Naive thymus-derived CD4-positive, alpha-beta T cell (primary cell): ENCODE measurements at regions of chr5 and their contacts with region 1.

Region 1: DNA sequence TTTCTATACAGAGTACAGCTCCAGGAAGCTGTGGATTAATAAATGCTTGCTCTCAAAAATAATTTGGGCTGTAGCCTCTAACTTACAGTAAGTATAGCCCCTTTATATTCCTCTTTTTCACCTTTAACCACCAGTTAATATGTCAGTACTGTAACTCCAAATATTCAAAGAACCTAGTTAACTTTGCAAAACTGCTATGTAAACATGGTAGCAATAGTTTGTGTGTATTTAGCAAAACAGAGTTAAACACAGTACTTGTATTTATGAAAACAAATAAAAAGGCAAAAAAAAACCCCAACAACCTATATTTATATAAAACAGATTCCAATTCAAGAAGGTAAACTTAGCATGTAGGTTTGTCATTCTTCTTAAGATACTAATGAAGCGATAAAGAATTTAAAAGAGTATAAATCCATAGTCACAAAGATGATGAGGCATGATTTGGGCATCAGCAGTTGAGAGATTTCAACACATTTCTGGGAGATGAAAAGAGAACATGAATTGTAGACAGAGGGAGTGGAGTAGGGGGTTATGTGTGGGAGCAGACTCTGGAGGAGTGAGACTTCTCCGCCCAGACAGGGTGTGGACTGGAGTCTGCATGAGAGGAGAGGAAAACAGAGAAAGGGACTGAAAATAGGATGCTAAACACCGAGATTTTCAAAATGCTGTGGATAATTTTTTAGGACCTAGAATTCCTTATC is 47.0 kb upstream of the F2RL1 start:
- DNase-seq: no peak
- ATAC-seq: no peak
- H3K4me3 ChIP-seq: no peak overlapping the region
- H3K4me3 Mint-ChIP-seq: no peak overlapping the region
- H3K27ac ChIP-seq: no peak overlapping the region
- H3K27ac Mint-ChIP-seq: peak overlapping the region in 2 of 9 donors; percentile 6 to 32
- H3K4me1 ChIP-seq: no peaks in the 10 kb centered on the region
- H3K4me1 Mint-ChIP-seq: peaks cover 0 to 7% (median 3%) of the 10 kb centered on the region in 7 donors
- H3K27me3 ChIP-seq: no peaks in the 10 kb centered on the region
- H3K27me3 Mint-ChIP-seq: peaks cover 0 to 4% (median 0%) of the 10 kb centered on the region in 5 donors

Region 2: GRCh38 chr5:76641514-76642120 is 130.2 kb before region 1 on chr5:
- CTCF ChIA-PET with region 1: no interaction called
- POLR2A ChIA-PET with region 1: no interaction called
- intact Hi-C with region 1: loop called in 1 of 2 experiments (anchors 1 kb)
- DNase-seq: peak; percentile 13 to 71 (median 55)
- ATAC-seq: peak; percentile 78
- H3K4me3 ChIP-seq: no peak overlapping the region
- H3K4me3 Mint-ChIP-seq: no peak overlapping the region
- H3K27ac ChIP-seq: no peak overlapping the region
- H3K27ac Mint-ChIP-seq: no peak overlapping the region
- H3K4me1 ChIP-seq: no peaks in the 10 kb centered on the region
- H3K4me1 Mint-ChIP-seq: peaks cover 0 to 13% (median 0%) of the 10 kb centered on the region in 7 donors
- H3K27me3 ChIP-seq: no peaks in the 10 kb centered on the region
- H3K27me3 Mint-ChIP-seq: no peaks in the 10 kb centered on the region

Region 3: GRCh38 chr5:76736679-76737556 is 34.9 kb before region 1 on chr5:
- CTCF ChIA-PET with region 1: interaction called, 9 read pairs
- POLR2A ChIA-PET with region 1: interaction called, 5 read pairs
- intact Hi-C with region 1: loop called in 1 of 2 experiments (anchors 1 kb)
- DNase-seq: no peak
- ATAC-seq: no peak
- H3K4me3 ChIP-seq: no peak overlapping the region
- H3K4me3 Mint-ChIP-seq: peak overlapping the region in 2 of 10 donors; percentile 51 to 69
- H3K27ac ChIP-seq: no peak overlapping the region
- H3K27ac Mint-ChIP-seq: peak overlapping the region in 2 of 9 donors; percentile 71 to 79
- H3K4me1 ChIP-seq: peaks cover 5 to 70% of the 10 kb centered on the region in 2 donors
- H3K4me1 Mint-ChIP-seq: peaks cover 8 to 49% (median 11%) of the 10 kb centered on the region in 7 donors
- H3K27me3 ChIP-seq: no peaks in the 10 kb centered on the region
- H3K27me3 Mint-ChIP-seq: peaks cover 3 to 11% (median 5%) of the 10 kb centered on the region in 5 donors

Region 4: GRCh38 chr5:77518304-77518703 is 746.4 kb after region 1 on chr5:
- CTCF ChIA-PET with region 1: no interaction called
- POLR2A ChIA-PET with region 1: no interaction called
- intact Hi-C with region 1: no loop called
- DNase-seq: no peak
- ATAC-seq: no peak
- H3K4me3 ChIP-seq: no peak overlapping the region
- H3K4me3 Mint-ChIP-seq: no peak overlapping the region
- H3K27ac ChIP-seq: no peak overlapping the region
- H3K27ac Mint-ChIP-seq: no peak overlapping the region
- H3K4me1 ChIP-seq: no peaks in the 10 kb centered on the region
- H3K4me1 Mint-ChIP-seq: no peaks in the 10 kb centered on the region
- H3K27me3 ChIP-seq: no peaks in the 10 kb centered on the region
- H3K27me3 Mint-ChIP-seq: peaks cover 5 to 14% (median 10%) of the 10 kb centered on the region in 5 donors